CD14-positive monocyte (primary cell): ENCODE measurements at regions of chr4 and their contacts with region 1.

Region 1: DNA sequence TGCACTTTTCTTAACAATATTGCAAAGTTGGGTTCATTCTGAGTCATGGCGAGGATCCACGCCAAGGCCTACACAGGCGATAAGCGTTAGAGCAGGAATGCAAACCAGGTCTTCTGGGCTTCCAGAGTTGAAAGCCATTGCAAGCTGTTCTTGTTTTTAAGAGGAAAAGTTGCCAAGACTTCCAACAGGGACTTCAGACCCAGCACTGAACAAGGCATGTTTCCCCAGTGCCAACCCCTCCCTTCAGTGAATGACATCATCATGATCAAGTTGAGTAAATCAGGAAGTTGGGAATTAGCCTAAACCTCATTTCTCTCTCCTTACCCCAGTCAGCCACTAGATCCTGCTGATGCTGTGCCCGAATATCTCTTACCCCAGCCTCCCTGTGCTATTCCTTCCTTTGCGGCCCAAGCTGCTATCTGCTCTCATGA is 355.1 kb downstream of the HS3ST1 start:
- DNase-seq: peak in 1 of 3 donors; percentile 37
- H3K4me3 ChIP-seq: no peak overlapping the region
- H3K4me3 Mint-ChIP-seq: no peak overlapping the region
- H3K27ac ChIP-seq: no peak overlapping the region
- H3K27ac Mint-ChIP-seq: peak overlapping the region in 1 of 7 donors; percentile 1
- H3K4me1 ChIP-seq: no peaks in the 10 kb centered on the region
- H3K4me1 Mint-ChIP-seq: peaks cover 5% of the 10 kb centered on the region
- H3K27me3 ChIP-seq: no peaks in the 10 kb centered on the region
- H3K27me3 Mint-ChIP-seq: peaks cover 0 to 2% (median 0%) of the 10 kb centered on the region in 3 donors
- CTCF ChIP-seq: no peak

Region 2: GRCh38 chr4:10872833-10873517 is 200.7 kb before region 1 on chr4:
- intact Hi-C with region 1: no loop called
- DNase-seq: no peak
- H3K4me3 ChIP-seq: no peak overlapping the region
- H3K4me3 Mint-ChIP-seq: no peak overlapping the region
- H3K27ac ChIP-seq: no peak overlapping the region
- H3K27ac Mint-ChIP-seq: no peak overlapping the region
- H3K4me1 ChIP-seq: no peaks in the 10 kb centered on the region
- H3K4me1 Mint-ChIP-seq: no peaks in the 10 kb centered on the region
- H3K27me3 ChIP-seq: no peaks in the 10 kb centered on the region
- H3K27me3 Mint-ChIP-seq: peaks cover 0 to 2% (median 2%) of the 10 kb centered on the region in 3 donors
- CTCF ChIP-seq: no peak

Region 3: GRCh38 chr4:11053601-11054220 is 19.9 kb before region 1 on chr4:
- intact Hi-C with region 1: loop called in 1 of 2 experiments (anchors 2 kb)
- DNase-seq: no peak
- H3K4me3 ChIP-seq: no peak overlapping the region
- H3K4me3 Mint-ChIP-seq: no peak overlapping the region
- H3K27ac ChIP-seq: no peak overlapping the region
- H3K27ac Mint-ChIP-seq: no peak overlapping the region
- H3K4me1 ChIP-seq: no peaks in the 10 kb centered on the region
- H3K4me1 Mint-ChIP-seq: no peaks in the 10 kb centered on the region
- H3K27me3 ChIP-seq: no peaks in the 10 kb centered on the region
- H3K27me3 Mint-ChIP-seq: peaks cover 0 to 2% (median 0%) of the 10 kb centered on the region in 3 donors
- CTCF ChIP-seq: no peak